ENCODE measurements at regions of chr1 and their contacts with region 1.

Region 1: DNA sequence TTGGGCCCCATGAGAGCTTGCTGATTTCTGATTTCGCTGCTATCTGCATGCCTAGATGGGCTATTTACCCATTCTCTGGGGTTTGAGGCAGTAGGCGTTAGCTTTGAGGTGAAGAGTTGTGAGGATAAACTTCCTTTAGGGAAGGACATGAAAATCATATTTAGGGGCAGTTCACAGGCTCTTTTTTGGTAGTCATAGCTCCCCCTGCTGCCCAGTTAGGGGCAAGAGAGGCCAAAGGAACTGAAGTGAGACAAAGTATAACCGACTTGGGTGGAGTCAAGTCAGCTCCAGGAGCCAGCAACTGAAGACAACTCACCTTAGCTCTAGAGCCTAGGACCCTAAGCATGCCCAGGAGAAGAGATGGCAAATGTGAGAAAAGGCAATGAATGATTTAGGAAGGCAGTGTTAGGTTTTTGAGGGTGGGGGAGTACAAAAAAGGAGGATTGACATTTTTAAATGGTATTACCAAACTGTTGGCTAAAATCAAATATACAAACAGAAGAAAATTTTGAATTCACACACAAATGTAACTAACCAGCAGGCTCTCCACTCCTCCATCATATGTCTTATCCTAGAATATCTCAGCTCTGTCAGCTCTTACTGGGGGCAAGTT is 625.2 kb downstream of the LMO4 start:
- DNase-seq: peak; percentile 75
- H3K4me3 ChIP-seq: no peak overlapping the region
- H3K27ac ChIP-seq: no peak overlapping the region
- H3K4me1 ChIP-seq: peaks cover 0 to 12% (median 1%) of the 10 kb centered on the region in 4 donors
- H3K27me3 ChIP-seq: no peaks in the 10 kb centered on the region
- CTCF ChIP-seq: peak; percentile 72 to 81 (median 77)
- EP300 ChIP-seq: no peak
- POLR2A ChIP-seq: no peak

Region 2: DNA sequence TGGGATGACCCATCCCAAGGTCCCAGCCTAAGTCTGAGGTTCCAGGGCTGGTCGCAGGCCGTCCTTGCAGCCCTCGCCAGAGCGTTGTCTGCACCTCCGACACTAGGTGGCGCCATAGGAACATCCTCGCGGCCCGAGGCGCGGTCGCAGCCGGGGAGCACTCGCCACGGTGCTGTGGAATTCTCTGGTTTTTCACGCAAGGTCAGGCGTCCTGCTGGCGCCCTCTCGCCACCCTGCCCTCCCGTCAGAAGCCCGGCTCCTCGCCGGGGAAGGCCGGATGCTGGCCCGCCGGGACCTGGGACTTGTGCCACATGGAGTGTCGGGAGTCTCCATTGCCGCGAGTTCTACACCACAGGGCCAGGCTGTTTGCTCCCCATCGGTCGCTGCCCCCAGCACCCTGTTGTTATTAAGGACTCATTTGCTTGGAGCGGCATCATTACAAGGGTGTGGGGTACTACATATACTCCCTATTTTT is 822.0 kb before region 1 on chr1:
- in situ Hi-C with region 1: loop called in 3 of 4 experiments (anchors 25 kb)
- intact Hi-C with region 1: no loop called
- DNase-seq: peak; percentile 79
- H3K4me3 ChIP-seq: peak overlapping the region; percentile 20 to 51 (median 33)
- H3K27ac ChIP-seq: peak overlapping the region; percentile 4 to 40 (median 22)
- H3K4me1 ChIP-seq: peaks cover 0 to 7% (median 0%) of the 10 kb centered on the region in 4 donors
- H3K27me3 ChIP-seq: no peaks in the 10 kb centered on the region
- CTCF ChIP-seq: peak; percentile 82 to 94 (median 88)
- EP300 ChIP-seq: no peak
- POLR2A ChIP-seq: no peak

Region 3: DNA sequence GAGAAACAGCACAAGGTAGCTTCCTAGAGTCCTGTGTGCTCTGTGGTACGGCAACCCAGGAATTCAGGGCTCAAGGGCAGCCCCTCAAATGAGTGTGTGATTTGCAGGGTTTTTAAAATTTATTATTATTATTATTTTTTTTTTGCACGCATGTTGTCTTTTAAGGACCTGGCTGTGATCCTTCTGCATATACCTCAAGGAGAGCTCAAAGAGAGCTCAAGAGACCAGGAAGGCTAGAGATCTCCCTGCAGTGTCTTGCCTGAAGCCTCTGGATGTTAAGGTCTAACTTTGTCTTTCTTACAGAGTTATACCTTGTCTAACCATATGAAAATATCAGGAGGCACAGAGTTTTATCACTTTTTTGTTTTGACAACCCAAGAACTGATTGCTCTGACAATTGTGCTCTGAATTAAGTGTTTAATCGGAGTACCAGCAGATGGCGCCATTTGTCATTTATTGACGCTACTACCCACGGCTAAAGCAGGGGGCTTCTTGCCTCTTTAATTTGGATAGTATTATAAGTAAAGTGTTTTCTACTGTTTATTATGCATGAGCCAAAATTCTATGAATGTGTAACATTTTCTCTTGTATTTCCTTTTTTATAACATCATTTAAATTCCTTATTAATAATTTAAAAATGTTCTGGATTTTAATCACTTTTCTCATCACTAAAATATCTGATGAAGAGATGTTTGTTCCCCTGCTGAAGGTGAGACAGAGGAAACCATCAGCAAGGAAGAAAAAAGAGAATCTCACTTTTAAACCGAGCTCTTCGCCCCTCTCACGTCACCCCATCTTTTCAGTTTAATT is 660.9 kb before region 1 on chr1:
- in situ Hi-C with region 1: loop called in 1 of 4 experiments (anchors 25 kb)
- intact Hi-C with region 1: no loop called
- DNase-seq: peak; percentile 59
- H3K4me3 ChIP-seq: no peak overlapping the region
- H3K27ac ChIP-seq: no peak overlapping the region
- H3K4me1 ChIP-seq: no peaks in the 10 kb centered on the region
- H3K27me3 ChIP-seq: no peaks in the 10 kb centered on the region
- CTCF ChIP-seq: peak; percentile 69 to 85 (median 77)
- EP300 ChIP-seq: no peak
- POLR2A ChIP-seq: no peak

Region 4: DNA sequence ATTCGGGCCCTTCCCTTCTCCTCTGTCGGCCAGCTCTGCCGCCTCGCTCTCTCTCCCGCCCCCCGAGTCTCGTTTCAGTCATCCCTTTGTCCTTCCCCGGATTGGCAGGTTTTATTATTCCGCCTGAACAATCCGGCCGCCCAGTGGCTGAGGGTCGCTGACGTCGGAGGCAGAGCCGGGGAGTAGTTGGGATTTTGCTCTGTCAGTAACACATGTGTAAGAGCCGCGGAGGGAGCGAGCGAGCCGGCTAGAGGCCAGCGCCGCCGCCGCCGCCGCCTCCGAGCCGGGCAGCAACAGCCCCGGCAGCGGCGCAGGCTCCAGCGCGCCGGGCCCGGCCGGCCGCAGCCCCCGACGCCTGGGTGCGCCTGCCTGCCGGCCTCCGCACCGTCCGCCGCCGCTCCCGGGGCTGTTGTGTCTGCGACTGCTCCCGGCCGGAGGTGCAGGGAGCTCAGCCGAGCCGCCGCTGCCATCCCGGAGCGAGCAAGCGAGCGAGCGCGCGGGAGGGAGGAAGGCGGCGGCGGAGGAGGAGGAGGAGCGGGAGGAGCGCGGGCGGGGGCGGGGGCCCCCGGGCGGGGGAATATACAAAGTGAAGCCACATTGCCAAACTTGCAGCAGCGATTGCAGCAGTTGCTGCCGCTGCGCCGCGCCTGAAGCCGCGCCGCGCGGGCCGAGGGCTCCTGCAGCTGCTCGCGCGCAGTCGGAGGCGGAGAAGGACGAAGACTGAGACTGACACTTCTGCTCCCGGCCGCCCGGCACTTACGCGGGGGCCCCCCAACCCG is 625.4 kb before region 1 on chr1 and contains the start of gene LMO4:
- in situ Hi-C with region 1: loop called in 3 of 4 experiments (anchors 10 kb)
- intact Hi-C with region 1: loop called (anchors 10 kb)
- DNase-seq: peak; percentile 97
- H3K4me3 ChIP-seq: peak within 1 kb of the TSS; percentile 73 to 92 (median 80)
- H3K27ac ChIP-seq: peak within 1 kb of the TSS; percentile 98 to 99 (median 99)
- H3K4me1 ChIP-seq: peaks cover 9 to 33% (median 21%) of the 10 kb centered on the region in 4 donors
- H3K27me3 ChIP-seq: no peaks in the 10 kb centered on the region
- CTCF ChIP-seq: peak in 1 of 5 experiments; percentile 35
- EP300 ChIP-seq: no peak
- POLR2A ChIP-seq: peak; percentile 80
- total RNA-seq, gene LMO4: 8.4 to 22.4 (median 16.4) TPM

Region 5: GRCh38 chr1:88029142-88029541 is 75.3 kb after region 1 on chr1:
- in situ Hi-C with region 1: no loop called
- intact Hi-C with region 1: no loop called
- DNase-seq: peak; percentile 34
- H3K4me3 ChIP-seq: no peak overlapping the region
- H3K27ac ChIP-seq: no peak overlapping the region
- H3K4me1 ChIP-seq: no peaks in the 10 kb centered on the region
- H3K27me3 ChIP-seq: no peaks in the 10 kb centered on the region
- CTCF ChIP-seq: peak in 2 of 5 experiments; percentile 22 to 26
- EP300 ChIP-seq: no peak
- POLR2A ChIP-seq: no peak

Region 6: GRCh38 chr1:88052167-88052566 is 98.3 kb after region 1 on chr1:
- in situ Hi-C with region 1: no loop called
- intact Hi-C with region 1: no loop called
- DNase-seq: no peak
- H3K4me3 ChIP-seq: no peak overlapping the region
- H3K27ac ChIP-seq: no peak overlapping the region
- H3K4me1 ChIP-seq: no peaks in the 10 kb centered on the region
- H3K27me3 ChIP-seq: no peaks in the 10 kb centered on the region
- CTCF ChIP-seq: no peak
- EP300 ChIP-seq: no peak
- POLR2A ChIP-seq: no peak

Measured in transverse colon (tissue), 4 donors.